Activated T-helper 1 cell treated with anti-CD3 and anti-CD28 coated beads, Interleukin-12 subunit alpha, Interleukin-12 subunit beta, Interleukin-2, Interleukin-4 antibody, amounts not matched to agents 30 ng/mL and 10 ng/mL and 1 ng/mL, durations not matched to agents 14 hours and 24 hours and 36 hours (primary cell): ENCODE measurements at regions of chr2 and their contacts with region 1.

Region 1: DNA sequence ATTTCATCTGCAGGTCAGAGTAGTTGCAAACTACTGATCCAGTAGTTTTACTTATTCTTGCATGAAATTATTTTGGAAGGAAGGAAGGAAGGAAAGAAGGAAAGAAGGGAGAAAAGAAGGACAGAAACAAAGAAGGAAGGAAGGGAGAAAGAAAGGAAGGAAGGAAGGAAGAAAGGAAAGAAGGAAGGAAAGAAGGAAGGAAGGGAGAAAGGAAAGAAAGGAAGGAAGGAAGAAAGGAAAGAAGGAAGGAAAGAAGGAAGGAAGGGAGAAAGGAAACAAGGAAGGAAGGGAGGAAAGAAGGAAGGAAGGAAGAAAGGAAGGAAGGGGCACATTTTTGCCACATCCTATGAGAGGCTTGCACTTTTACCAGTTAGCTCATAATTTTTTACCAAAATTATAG is 186.2 kb downstream of the LRRTM4 start:
- DNase-seq: no peak
- H3K4me3 Mint-ChIP-seq: no peak overlapping the region
- H3K27ac Mint-ChIP-seq: no peak overlapping the region
- H3K4me1 Mint-ChIP-seq: no peaks in the 10 kb centered on the region
- H3K27me3 Mint-ChIP-seq: no peaks in the 10 kb centered on the region

Region 2: DNA sequence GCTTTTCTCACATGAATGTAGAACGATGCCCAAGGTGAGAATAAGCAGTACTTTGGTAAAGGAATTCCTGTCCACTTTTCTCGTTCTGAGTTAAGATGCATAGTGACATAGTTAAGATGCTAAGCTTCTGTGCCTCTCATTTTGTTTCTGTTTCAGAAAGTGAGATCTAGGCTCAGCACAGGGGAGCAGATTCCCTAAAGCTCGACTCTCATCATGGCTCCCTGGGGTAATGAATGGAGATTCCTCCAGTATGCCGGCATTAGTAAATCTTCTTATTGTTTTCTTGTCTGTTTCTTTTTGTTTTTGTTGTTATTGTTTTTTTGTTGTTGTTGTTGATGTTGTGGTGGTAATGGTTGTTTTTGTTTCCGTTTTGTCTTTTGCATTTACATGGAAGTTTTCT is 39.2 kb before region 1 on chr2:
- intact Hi-C with region 1: no loop called
- DNase-seq: no peak
- H3K4me3 Mint-ChIP-seq: no peak overlapping the region
- H3K27ac Mint-ChIP-seq: no peak overlapping the region
- H3K4me1 Mint-ChIP-seq: no peaks in the 10 kb centered on the region
- H3K27me3 Mint-ChIP-seq: no peaks in the 10 kb centered on the region

Region 3: DNA sequence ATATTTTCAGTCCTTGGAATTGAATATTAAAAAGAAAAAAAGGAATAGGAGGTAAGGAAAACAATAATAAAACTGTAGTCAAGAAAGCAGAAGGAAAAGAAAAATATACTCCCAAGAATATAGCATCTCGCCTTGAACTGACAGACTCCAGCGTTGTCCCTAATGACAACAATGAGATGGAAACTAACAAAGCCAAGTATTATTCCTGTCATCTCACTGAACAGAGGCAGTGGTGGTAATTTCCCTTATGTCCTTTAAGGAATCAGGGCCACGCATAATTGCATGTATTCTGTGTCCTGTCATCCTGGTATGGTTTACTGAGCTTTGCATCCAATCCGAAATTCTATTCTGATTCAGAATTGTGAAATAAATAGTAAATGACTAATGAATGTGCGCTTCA is 27.3 kb after region 1 on chr2:
- intact Hi-C with region 1: loop called (anchors 2 kb)
- DNase-seq: no peak
- H3K4me3 Mint-ChIP-seq: no peak overlapping the region
- H3K27ac Mint-ChIP-seq: no peak overlapping the region
- H3K4me1 Mint-ChIP-seq: no peaks in the 10 kb centered on the region
- H3K27me3 Mint-ChIP-seq: no peaks in the 10 kb centered on the region

Region 4: DNA sequence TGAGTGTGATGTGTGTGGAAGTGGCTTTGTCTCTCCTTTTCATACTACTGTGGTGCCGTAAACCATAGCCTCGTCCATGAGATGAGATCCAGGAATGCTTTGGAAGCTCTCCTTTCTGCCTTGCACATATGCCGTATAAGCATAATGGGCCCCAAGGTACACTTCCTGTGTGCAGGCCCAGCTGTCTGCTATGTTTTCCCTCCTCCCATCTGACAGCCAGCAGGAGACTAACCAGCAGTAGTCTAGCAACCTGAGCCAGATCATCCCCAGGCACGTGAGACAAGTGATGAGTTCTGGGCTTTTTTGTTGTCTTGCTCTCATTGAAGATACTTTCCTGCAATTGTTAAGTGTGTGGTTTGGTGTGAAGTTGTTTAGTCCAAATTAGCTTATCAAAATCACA is 741.6 kb after region 1 on chr2:
- intact Hi-C with region 1: no loop called
- DNase-seq: no peak
- H3K4me3 Mint-ChIP-seq: no peak overlapping the region
- H3K27ac Mint-ChIP-seq: no peak overlapping the region
- H3K4me1 Mint-ChIP-seq: no peaks in the 10 kb centered on the region
- H3K27me3 Mint-ChIP-seq: no peaks in the 10 kb centered on the region

Region 5: DNA sequence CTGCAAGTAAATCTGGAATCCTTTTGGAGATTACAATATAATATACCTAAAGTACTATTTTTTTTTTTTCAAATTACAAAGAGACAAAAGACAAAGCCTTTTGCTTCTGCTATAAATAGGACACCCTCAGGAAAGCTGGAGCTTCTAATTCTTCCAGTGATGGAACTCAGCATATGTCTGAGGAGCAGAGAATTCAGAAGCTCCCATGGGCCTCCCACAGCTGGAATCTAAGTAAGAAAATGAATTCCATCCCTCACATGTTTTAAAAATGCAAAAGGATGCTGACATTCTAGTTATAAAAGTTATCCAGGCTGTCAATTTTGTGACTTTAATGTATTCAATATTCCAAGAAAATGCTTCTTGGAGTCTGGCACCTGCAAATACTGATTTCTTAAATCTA is 757.4 kb after region 1 on chr2:
- intact Hi-C with region 1: no loop called
- DNase-seq: no peak
- H3K4me3 Mint-ChIP-seq: no peak overlapping the region
- H3K27ac Mint-ChIP-seq: no peak overlapping the region
- H3K4me1 Mint-ChIP-seq: no peaks in the 10 kb centered on the region
- H3K27me3 Mint-ChIP-seq: no peaks in the 10 kb centered on the region